ENCODE measurements at regions of chr14 and their contacts with region 1.

Region 1: GRCh38 chr14:23984891-23985602 is 3.7 kb upstream of the DHRS4L2 start:
- DNase-seq: peak; percentile 86
- ATAC-seq: peak; percentile 23
- H3K4me3 ChIP-seq: no peak overlapping the region
- H3K27ac ChIP-seq: no peak overlapping the region
- H3K4me1 ChIP-seq: no peaks in the 10 kb centered on the region
- H3K27me3 ChIP-seq: no peaks in the 10 kb centered on the region
- CTCF ChIP-seq: no peak
- POLR2A ChIP-seq: no peak
- RAD21 ChIP-seq: no peak

Region 2: GRCh38 chr14:23942387-23942986 is 42.6 kb before region 1 on chr14:
- CTCF ChIA-PET with region 1: no interaction called
- POLR2A ChIA-PET with region 1: no interaction called
- dilution Hi-C with region 1: no loop called
- in situ Hi-C with region 1: no loop called
- intact Hi-C with region 1: no loop called
- DNase-seq: no peak
- ATAC-seq: no peak
- H3K4me3 ChIP-seq: no peak overlapping the region
- H3K27ac ChIP-seq: no peak overlapping the region
- H3K4me1 ChIP-seq: no peaks in the 10 kb centered on the region
- H3K27me3 ChIP-seq: no peaks in the 10 kb centered on the region
- CTCF ChIP-seq: no peak
- POLR2A ChIP-seq: no peak
- RAD21 ChIP-seq: no peak

Region 3: DNA sequence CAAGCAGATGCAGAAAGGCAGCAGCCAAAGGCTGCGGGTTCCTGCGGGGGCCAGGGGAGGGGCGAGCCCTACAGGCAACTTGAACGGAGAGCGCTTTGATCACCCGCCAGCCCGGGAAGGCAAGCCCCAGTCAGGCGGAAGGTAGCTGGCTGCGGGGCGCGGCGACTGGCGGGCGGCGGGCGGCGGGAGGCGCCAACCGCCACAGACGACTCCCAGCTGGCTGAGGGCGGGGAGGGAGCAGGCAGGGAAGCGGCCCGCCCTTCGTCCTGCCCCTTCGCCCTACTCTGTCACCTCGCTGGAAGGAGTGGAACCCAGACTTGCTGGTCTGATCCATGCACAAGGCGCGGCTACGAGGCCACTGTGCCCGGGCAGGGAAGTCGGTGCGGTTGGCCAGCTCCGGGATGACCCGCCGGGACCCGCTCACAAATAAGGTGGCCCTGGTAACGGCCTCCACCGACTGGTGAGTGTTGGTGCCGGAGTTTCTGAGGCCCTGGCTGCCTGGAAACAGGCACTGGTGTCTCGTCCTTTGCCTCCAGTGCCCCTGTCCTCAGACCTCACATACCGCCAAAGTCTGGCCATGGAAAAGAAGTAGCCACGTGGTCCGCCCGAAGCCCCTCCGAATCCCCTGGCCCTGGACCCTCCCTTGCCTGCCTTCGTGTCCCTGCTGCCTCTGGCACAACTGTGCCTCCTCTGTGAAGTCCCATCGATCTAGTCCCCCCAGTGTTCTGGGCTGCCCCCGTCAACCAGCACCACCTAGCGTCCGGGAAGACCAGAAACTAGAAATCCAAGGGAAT is 51.3 kb after region 1 on chr14:
- CTCF ChIA-PET with region 1: no interaction called
- POLR2A ChIA-PET with region 1: no interaction called
- dilution Hi-C with region 1: no loop called
- in situ Hi-C with region 1: loop called (anchors 10 kb)
- intact Hi-C with region 1: loop called (anchors 5 kb)
- DNase-seq: peak; percentile 49
- ATAC-seq: peak; percentile 94
- H3K4me3 ChIP-seq: peak overlapping the region; percentile 55
- H3K27ac ChIP-seq: peak overlapping the region; percentile 37
- H3K4me1 ChIP-seq: no peaks in the 10 kb centered on the region
- H3K27me3 ChIP-seq: peaks cover under 1% of the 10 kb centered on the region; the same call in 1 of the 2 replicates
- CTCF ChIP-seq: peak; percentile 67
- POLR2A ChIP-seq: no peak
- RAD21 ChIP-seq: peak; percentile 53

Measured in IMR-90 (cell line).